OCI-LY7 (cell line): ENCODE measurements at regions of chr4 and their contacts with region 1.

Region 1: GRCh38 chr4:19700992-19701391 is 550.7 kb upstream of the SLIT2 start:
- DNase-seq: no peak
- H3K4me3 ChIP-seq: no peak overlapping the region
- H3K27ac ChIP-seq: no peak overlapping the region
- H3K4me1 ChIP-seq: no peaks in the 10 kb centered on the region
- CTCF ChIP-seq: no peak

Region 2: DNA sequence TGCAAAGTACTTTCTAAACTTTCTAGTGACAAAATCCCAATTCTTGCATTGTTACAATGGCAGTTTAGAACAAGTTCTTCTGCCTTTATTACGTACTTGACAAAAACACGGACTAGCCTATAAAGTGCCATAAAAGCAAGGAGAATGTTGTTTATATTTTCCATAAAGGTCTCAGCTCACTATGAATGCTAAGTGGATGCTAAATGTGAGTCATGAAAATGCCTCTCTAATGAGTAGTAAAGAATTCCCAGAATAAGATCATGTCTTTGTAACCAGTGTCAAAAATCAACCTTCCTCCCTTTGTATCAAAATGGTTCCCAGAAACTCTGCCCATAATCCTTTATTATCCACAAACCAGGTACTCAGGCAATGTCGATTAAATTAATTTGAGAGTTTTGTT is 10.9 kb after region 1 on chr4:
- CTCF ChIA-PET with region 1: no interaction called
- POLR2A ChIA-PET with region 1: interaction called, 12 read pairs
- intact Hi-C with region 1: no loop called
- DNase-seq: no peak
- H3K4me3 ChIP-seq: no peak overlapping the region
- H3K27ac ChIP-seq: no peak overlapping the region
- H3K4me1 ChIP-seq: peaks cover 17% of the 10 kb centered on the region
- CTCF ChIP-seq: no peak